Caco-2 (cell line): ENCODE measurements at regions of chr22 and their contacts with region 1.

Region 1: DNA sequence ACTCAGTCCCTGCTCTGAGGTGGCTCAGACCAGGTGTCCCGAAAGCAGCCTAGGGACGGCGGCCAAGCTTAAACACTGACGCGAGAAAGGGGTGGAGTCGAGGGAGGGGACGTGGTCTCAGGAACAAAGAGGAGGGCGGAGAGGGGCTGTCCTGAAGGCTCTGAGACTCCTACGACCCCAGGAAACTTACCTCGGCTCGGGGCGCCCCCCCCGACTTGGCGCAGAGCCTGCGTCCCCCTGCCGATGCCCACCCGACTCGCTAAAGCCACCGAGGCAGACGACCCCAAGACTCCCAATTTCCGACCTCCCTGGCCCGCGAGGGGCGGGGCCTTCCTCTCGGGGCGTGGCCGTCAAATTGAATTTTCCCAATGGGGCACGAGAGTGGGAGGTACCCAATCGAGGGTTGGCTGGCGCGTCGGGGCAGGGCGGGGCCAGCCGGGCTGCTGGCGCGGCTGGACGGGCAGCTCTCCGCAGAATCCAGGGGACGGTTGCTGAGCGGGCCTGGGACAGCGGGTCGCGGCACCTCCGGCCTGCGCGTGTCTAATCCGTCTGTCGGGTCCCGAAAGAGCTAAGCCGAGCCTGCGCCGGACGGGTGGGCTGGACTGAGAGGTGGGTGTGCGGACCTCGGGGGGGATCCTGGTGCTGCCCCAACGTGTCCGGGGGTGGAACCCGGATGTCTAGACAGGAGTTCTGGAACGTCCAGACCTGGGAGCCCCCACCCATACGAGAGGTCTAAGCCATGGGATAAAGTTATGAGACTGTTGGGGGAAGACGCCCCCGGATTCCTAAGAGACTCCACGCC is at the start of gene SMTN:
- DNase-seq: peak; percentile 93 to 96
- H3K4me3 ChIP-seq: peak within 1 kb of the TSS; percentile 60
- H3K4me3 Mint-ChIP-seq: peak within 1 kb of the TSS; percentile 94
- H3K27ac Mint-ChIP-seq: peak within 1 kb of the TSS; percentile 95
- H3K4me1 ChIP-seq: peaks cover 38% of the 10 kb centered on the region
- H3K4me1 Mint-ChIP-seq: peaks cover 30% of the 10 kb centered on the region
- H3K27me3 ChIP-seq: no peaks in the 10 kb centered on the region
- H3K27me3 Mint-ChIP-seq: no peaks in the 10 kb centered on the region
- CTCF ChIP-seq: no peak
- total RNA-seq, gene SMTN: 69.8 and 71.0 TPM in 2 replicates

Region 2: DNA sequence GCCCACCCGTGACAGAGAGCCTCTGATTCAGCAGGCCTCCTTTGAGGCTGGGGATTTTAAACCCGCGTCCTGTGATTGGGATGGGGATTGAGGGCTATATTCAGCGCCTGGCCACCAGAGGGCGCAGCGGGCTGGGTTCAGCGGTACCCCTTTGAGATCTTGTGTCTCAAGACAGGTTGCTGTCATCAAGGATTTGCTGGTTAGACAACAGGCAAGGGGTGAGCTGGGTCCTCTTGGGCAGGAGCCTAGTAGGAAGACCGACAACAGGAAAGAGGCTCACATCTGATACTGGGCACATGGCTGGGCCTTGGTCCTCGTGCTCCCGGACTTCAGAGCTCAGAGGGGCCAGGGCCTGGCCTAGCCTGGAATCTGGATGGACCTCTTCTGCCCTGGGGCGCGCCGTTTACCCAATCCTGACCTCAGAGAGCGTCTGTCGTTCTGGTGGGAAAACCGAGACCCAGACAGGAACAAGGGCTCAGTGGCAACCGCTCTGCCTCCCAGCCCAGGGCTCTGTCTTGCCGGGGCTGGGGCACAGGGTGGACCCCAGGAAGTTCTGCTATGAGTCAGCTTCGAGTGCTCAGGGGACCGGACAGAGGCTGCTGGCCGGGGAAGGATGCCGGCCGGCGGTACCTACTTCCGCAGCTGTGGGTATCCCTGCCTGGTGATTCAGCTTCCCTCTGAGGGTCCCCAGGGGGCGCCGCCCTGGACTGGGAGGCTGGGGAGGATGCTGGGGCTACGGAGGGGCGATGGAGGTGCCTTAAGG is 446.4 kb before region 1 on chr22:
- CTCF ChIA-PET with region 1: interaction called, 10 read pairs
- POLR2A ChIA-PET with region 1: no interaction called
- intact Hi-C with region 1: no loop called
- DNase-seq: peak; percentile 83 to 89
- H3K4me3 ChIP-seq: no peak overlapping the region; the same call in 1 of the 2 replicates
- H3K4me3 Mint-ChIP-seq: peak overlapping the region; percentile 66
- H3K27ac Mint-ChIP-seq: no peak overlapping the region
- H3K4me1 ChIP-seq: peaks cover 13% of the 10 kb centered on the region
- H3K4me1 Mint-ChIP-seq: no peaks in the 10 kb centered on the region
- H3K27me3 ChIP-seq: no peaks in the 10 kb centered on the region
- H3K27me3 Mint-ChIP-seq: no peaks in the 10 kb centered on the region
- CTCF ChIP-seq: peak; percentile 92 to 94

Region 3: GRCh38 chr22:31036671-31037550 is 44.1 kb before region 1 on chr22:
- CTCF ChIA-PET with region 1: interaction called, 12 read pairs
- POLR2A ChIA-PET with region 1: no interaction called
- intact Hi-C with region 1: no loop called
- DNase-seq: no peak
- H3K4me3 ChIP-seq: no peak overlapping the region
- H3K4me3 Mint-ChIP-seq: no peak overlapping the region
- H3K27ac Mint-ChIP-seq: no peak overlapping the region
- H3K4me1 ChIP-seq: no peaks in the 10 kb centered on the region
- H3K4me1 Mint-ChIP-seq: no peaks in the 10 kb centered on the region
- H3K27me3 ChIP-seq: no peaks in the 10 kb centered on the region
- H3K27me3 Mint-ChIP-seq: no peaks in the 10 kb centered on the region
- CTCF ChIP-seq: no peak

Region 4: DNA sequence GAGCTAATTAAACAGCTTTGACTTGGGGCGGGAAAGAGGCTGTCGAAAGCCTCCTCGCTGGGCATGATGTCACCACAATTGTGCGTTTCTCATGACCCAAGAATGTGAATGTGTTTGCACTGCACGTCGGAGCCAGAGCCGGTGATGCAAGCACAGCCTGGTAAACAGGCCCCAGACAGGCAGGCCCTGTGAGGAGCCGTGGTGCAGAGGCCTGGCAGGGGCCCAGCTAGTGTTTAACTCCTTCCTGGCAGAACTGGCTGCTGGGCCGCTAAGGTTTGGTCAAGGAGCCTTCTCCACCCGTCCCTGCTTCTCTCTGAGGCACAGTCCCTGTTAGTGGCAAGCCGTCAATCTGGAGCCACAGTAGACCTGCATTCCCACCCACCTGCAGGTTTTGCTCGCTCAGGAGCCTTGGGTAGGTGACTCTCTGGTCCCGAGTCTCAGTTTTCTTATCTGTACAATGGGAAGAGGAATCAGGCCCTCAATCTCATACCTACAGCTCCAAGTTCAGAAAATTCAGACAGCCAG is 25.4 kb before region 1 on chr22:
- CTCF ChIA-PET with region 1: interaction called, 8 read pairs
- POLR2A ChIA-PET with region 1: interaction called, 16 read pairs
- intact Hi-C with region 1: loop called (anchors 1 kb)
- DNase-seq: peak; percentile 93 to 96
- H3K4me3 ChIP-seq: no peak overlapping the region
- H3K4me3 Mint-ChIP-seq: peak overlapping the region; percentile 42
- H3K27ac Mint-ChIP-seq: peak overlapping the region; percentile 91
- H3K4me1 ChIP-seq: peaks cover 26% of the 10 kb centered on the region
- H3K4me1 Mint-ChIP-seq: peaks cover 11% of the 10 kb centered on the region
- H3K27me3 ChIP-seq: no peaks in the 10 kb centered on the region
- H3K27me3 Mint-ChIP-seq: no peaks in the 10 kb centered on the region
- CTCF ChIP-seq: no peak

Region 5: GRCh38 chr22:31062566-31063230 is 18.4 kb before region 1 on chr22:
- CTCF ChIA-PET with region 1: interaction called, 29 read pairs
- POLR2A ChIA-PET with region 1: interaction called, 26 read pairs
- intact Hi-C with region 1: no loop called
- DNase-seq: no peak
- H3K4me3 ChIP-seq: no peak overlapping the region
- H3K4me3 Mint-ChIP-seq: no peak overlapping the region
- H3K27ac Mint-ChIP-seq: no peak overlapping the region
- H3K4me1 ChIP-seq: peaks cover 4% of the 10 kb centered on the region; the same call in 1 of the 2 replicates
- H3K4me1 Mint-ChIP-seq: peaks cover 12% of the 10 kb centered on the region
- H3K27me3 ChIP-seq: no peaks in the 10 kb centered on the region
- H3K27me3 Mint-ChIP-seq: no peaks in the 10 kb centered on the region
- CTCF ChIP-seq: no peak